ENCODE measurements at regions of chr7 and their contacts with region 1.

Region 1: GRCh38 chr7:74417419-74417971 is 36.2 kb upstream of the GTF2IRD1 start:
- DNase-seq: peak; percentile 44 to 75
- H3K4me3 ChIP-seq: no peak overlapping the region
- H3K27ac ChIP-seq: no peak overlapping the region
- H3K4me1 ChIP-seq: no peaks in the 10 kb centered on the region
- H3K27me3 ChIP-seq: no peaks in the 10 kb centered on the region
- CTCF ChIP-seq: peak; percentile 96

Region 2: DNA sequence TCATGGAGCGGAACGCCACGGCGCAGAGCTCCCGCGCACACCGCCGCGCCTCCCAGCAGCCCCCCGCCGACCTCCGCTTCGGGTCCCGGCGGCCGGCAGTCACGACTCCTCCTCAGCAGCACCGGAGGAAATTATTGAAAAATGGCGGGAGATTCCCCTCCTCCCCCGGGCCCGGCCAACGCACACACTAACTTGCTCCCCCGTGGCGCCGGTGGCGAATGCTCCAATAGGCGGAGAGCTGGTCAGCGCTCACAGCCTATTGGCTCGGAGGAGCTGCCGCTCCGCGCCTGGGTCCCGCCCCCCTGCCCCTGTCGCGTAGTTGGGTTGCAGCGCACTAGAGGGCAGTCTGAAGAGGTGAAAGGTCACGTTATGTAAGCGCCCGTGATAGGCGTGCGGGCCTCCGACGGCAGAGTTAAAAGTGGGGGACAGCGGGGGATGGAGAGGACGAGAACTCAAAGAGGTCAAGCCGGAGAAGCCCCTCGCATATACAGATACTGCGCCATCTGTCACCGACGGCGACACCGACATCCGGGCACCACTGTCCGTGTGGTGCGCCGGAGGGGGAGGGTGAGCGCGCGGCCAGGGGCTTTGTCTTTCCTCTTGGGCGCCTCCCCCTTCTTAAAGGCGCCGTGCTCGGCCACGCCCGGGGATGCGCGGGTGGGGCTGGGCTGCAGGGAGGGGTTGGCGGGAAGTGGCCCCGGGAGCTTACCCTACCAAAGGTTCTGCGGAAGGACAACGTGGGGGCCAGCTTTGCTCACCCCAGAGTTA is 895.2 kb before region 1 on chr7 and contains the start of gene BAZ1B:
- CTCF ChIA-PET with region 1: no interaction called
- POLR2A ChIA-PET with region 1: no interaction called
- intact Hi-C with region 1: no loop called
- DNase-seq: peak; percentile 93 to 98
- H3K4me3 ChIP-seq: peak within 1 kb of the TSS; percentile 84
- H3K27ac ChIP-seq: peak within 1 kb of the TSS; percentile 39
- H3K4me1 ChIP-seq: peaks cover 28% of the 10 kb centered on the region
- H3K27me3 ChIP-seq: no peaks in the 10 kb centered on the region
- CTCF ChIP-seq: no peak
- total RNA-seq, gene BAZ1B: 73.6 and 88.4 TPM in 2 replicates

Region 3: DNA sequence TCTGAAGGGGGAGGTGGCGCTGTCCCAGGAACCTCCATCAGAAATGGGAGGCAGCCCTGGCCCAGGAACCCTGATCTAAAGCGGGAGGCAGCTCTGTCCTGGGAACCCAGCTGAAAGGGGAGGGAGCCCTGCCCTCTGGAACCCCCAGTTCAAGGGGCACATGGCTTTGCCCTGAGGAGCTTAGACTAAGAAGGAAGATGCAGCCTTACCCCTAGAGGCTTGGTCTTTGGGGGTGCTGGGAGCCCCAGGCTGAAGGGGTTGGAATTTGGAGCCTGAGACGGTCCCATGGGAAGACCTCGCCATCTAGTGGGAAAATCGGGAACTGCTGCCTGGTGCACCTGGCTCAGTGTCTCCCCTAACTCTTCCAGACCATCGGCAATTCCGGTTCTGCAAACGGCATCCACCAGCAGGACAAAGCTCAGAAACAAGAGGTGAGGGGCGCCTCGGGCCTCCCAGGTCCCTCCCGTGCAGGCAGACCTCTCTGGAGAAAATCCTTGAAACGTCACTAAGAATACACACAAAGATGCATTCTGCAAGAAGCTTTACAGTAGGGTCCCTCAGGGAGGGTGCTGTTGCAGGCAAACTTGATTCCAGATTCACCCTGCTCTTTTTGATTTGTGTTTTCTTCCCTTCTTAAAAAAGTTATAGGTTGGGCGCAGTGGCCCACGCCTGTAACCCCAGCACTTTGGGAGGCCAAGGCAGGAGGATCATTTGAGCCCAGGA is 16.2 kb before region 1 on chr7:
- CTCF ChIA-PET with region 1: no interaction called
- POLR2A ChIA-PET with region 1: no interaction called
- intact Hi-C with region 1: no loop called
- DNase-seq: peak; percentile 51 to 80
- H3K4me3 ChIP-seq: no peak overlapping the region
- H3K27ac ChIP-seq: no peak overlapping the region
- H3K4me1 ChIP-seq: no peaks in the 10 kb centered on the region
- H3K27me3 ChIP-seq: no peaks in the 10 kb centered on the region
- CTCF ChIP-seq: peak; percentile 98

Region 4: DNA sequence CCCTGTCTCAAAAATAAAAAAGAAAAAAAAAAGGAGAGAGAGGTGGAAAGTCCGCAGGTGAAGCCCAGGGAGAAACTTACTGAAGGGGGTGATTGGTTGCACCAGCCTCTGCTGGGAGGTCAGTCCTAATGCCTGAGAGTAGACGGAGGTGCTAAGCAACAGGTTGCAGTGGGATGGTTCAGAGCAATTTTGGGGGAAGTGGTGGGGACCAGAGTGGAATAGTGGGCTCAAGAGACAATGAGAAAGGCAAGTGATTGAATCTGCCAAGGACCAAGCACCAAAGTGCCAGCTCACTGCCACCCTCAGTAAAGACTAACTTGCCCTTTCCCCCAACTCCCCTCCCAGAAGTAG is 149.8 kb after region 1 on chr7:
- CTCF ChIA-PET with region 1: no interaction called
- POLR2A ChIA-PET with region 1: no interaction called
- intact Hi-C with region 1: loop called (anchors 2 kb)
- DNase-seq: no peak
- H3K4me3 ChIP-seq: no peak overlapping the region
- H3K27ac ChIP-seq: no peak overlapping the region
- H3K4me1 ChIP-seq: peaks cover 13% of the 10 kb centered on the region; the same call in 1 of the 2 replicates
- H3K27me3 ChIP-seq: no peaks in the 10 kb centered on the region
- CTCF ChIP-seq: no peak

Region 5: GRCh38 chr7:74709880-74710671 is 292.6 kb after region 1 on chr7:
- CTCF ChIA-PET with region 1: no interaction called
- POLR2A ChIA-PET with region 1: no interaction called
- intact Hi-C with region 1: loop called (anchors 2 kb)
- DNase-seq: no peak
- H3K4me3 ChIP-seq: no peak overlapping the region
- H3K27ac ChIP-seq: no peak overlapping the region
- H3K4me1 ChIP-seq: no peaks in the 10 kb centered on the region
- H3K27me3 ChIP-seq: no peaks in the 10 kb centered on the region
- CTCF ChIP-seq: no peak

Region 6: DNA sequence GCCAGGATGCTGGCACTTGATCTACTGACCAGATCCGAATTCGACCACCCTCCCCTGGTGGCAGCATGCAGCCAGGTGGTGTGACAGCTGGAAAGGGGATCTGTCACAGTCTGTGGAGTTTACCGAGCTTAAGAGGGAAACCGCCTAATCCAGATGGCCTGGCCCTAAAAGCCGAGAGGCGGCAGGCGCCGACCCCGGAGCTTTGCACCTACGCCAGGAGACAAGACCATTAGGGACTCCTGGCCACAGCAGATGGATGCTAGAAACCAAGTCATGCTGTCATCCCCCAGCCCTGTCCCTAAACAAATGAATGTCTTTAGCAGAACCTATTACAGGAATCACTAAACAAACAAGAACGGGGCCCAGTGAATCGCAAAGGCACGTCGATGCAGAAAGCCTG is 628.4 kb after region 1 on chr7:
- CTCF ChIA-PET with region 1: interaction called, 6 read pairs
- POLR2A ChIA-PET with region 1: no interaction called
- intact Hi-C with region 1: loop called (anchors 2 kb)
- DNase-seq: no peak
- H3K4me3 ChIP-seq: no peak overlapping the region
- H3K27ac ChIP-seq: no peak overlapping the region
- H3K4me1 ChIP-seq: no peaks in the 10 kb centered on the region
- H3K27me3 ChIP-seq: no peaks in the 10 kb centered on the region
- CTCF ChIP-seq: no peak

Measured in PC-9 (cell line).